GM10248 (cell line): ENCODE measurements at regions of chr2 and their contacts with region 1.

Region 1: GRCh38 chr2:200963124-200963917 is at the start of gene ORC2:
- DNase-seq: peak; percentile 95
- CTCF ChIP-seq: peak; percentile 83

Region 2: DNA sequence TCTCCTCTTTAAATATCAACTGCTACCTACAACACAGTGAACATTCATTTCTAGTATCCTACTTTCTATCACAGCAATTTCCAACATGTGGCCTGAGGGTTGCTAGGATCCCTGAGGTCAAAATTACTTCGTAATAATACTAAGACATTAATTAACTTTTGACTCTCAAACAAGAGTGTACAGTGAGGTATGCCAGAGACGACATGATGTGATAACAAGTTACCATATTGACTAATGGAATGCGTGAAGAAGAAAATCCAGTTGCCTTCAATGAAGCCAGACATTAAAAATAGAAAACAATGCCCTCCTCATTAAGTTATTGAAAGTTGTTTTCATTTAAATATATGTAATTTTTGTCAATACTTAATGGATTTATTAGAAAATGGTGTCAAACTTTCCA is 12.9 kb before region 1 on chr2:
- CTCF ChIA-PET with region 1: interaction called, 19 read pairs
- POLR2A ChIA-PET with region 1: interaction called, 4 read pairs
- DNase-seq: no peak
- CTCF ChIP-seq: no peak

Region 3: DNA sequence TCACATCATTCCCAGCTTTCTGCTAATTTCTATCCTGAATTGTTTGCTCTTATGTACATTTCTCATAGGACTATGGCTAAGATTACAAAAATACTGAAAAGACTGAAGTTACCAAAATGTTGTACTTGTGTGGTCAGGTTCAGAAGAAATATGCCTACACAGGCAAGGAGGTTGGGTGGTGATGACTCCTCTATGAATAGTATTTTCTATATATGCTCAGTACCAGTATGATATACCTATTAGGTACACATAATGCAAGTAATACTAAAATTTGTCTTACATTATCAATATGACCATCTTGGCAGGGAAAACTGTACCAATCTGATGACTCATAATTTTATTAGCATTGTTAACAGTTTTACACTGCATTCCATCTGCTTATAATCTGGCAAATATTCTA is 12.4 kb after region 1 on chr2:
- CTCF ChIA-PET with region 1: interaction called, 76 read pairs
- POLR2A ChIA-PET with region 1: no interaction called
- DNase-seq: no peak
- CTCF ChIP-seq: no peak

Region 4: GRCh38 chr2:200985799-200986198 is 22.5 kb after region 1 on chr2:
- CTCF ChIA-PET with region 1: interaction called, 14 read pairs
- POLR2A ChIA-PET with region 1: no interaction called
- DNase-seq: no peak
- CTCF ChIP-seq: no peak

Region 5: GRCh38 chr2:201071479-201072200 is 108.3 kb after region 1 on chr2 and contains the starts of genes HYCC2 and NDUFB3:
- CTCF ChIA-PET with region 1: interaction called, 22 read pairs
- POLR2A ChIA-PET with region 1: interaction called, 4 read pairs
- DNase-seq: peak; percentile 96
- CTCF ChIP-seq: peak; percentile 38

Region 6: DNA sequence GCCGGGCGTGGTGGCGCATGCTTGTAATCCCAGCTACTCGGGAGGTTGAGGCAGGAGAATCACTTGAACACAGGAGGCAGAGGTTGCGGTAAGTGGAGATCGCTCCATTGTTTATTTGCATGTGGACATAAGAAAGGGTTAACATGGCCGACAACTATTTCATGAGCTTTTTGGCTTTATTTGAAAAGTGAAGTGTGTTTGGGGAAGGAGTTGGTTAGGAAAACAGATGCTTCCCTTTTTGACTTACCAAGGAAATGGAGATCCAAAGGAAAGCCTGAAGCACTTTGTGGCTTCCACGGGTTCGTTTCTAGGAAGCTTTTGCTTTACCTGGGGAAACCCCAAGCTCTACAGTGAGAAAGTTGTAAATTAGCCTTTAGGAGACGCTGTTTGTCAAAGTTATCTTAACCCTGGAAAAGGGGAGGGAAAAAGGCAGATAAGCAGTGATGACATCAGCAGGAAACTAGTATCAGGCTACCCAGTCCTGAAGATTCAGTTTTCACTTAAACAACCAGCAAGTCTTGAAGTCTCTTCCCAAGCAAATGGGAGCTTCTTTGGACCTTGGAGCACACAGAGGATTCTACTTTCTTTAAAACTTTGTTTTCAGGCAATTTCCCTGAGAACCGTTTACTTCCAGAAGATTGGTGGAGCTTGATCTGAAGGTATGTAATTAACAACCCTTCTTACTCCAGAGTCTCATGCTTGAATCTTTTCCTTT is 219.5 kb after region 1 on chr2 and contains the start of gene CASP10:
- CTCF ChIA-PET with region 1: interaction called, 16 read pairs
- POLR2A ChIA-PET with region 1: no interaction called
- DNase-seq: peak; percentile 67
- CTCF ChIP-seq: peak; percentile 62

Region 7: DNA sequence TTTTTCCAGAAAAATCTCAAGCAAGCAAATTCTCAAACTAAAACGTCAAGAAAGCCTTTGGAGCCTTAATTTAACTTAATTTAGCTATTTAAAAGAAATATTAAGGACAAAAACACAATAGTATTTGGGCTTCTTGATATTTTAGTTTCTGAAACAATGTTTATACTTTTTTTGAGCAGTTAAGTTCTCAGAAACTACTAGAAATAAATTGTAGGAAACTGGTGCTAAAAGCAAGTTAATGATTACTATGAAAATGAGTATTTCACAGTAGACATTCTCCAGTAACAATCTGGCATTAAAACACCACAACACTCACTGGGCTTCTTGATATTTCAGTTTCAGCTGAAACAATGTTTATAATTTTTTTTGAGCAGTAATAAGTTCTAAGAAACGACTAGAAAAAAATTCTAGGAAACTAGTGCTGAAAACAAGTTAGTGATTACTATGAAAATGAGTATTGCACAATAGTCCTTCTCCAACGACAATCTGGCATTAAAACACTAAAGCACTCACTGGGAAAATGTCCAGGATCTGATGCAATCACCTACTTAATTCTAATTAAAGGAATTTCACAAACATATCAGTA is 442.8 kb after region 1 on chr2:
- CTCF ChIA-PET with region 1: no interaction called
- POLR2A ChIA-PET with region 1: no interaction called
- DNase-seq: no peak
- CTCF ChIP-seq: no peak